H1 (cell line): ENCODE measurements at regions of chr17 and their contacts with region 1.

Region 1: DNA sequence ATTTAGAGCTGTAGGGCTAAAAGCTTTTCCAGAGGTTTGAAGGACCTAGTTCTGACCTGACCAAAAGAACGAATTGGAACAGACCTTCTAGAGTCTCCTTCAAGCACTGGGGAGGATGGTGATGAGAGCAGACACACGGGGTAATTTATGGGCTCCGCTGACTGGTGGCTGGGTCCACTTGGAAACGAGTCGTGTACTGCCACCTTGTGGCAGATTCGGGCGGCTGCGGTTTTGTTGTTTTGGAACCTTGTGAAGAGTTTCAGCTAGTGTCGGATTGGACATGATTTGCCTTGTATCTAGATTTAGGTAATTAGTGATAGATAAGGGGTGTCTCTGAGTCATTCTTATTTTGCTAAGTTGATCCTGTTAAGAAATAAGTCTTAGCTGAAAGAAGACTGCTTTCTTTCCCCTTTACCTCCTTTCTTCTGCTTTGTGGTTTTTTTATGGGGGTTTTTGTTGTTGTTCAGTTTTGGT is 98.9 kb downstream of the AATF start:
- DNase-seq: peak; percentile 72 to 90
- H3K4me3 ChIP-seq: no peak overlapping the region
- H3K27ac ChIP-seq: no peak overlapping the region
- H3K4me1 ChIP-seq: peaks cover 6 to 24% (median 12%) of the 10 kb centered on the region in 4 experiments
- H3K27me3 ChIP-seq: no peaks in the 10 kb centered on the region
- CTCF ChIP-seq: peak; percentile 81 to 94 (median 88)
- EP300 ChIP-seq: no peak
- POLR2A ChIP-seq: no peak
- RAD21 ChIP-seq: peak; percentile 94 to 96

Region 2: DNA sequence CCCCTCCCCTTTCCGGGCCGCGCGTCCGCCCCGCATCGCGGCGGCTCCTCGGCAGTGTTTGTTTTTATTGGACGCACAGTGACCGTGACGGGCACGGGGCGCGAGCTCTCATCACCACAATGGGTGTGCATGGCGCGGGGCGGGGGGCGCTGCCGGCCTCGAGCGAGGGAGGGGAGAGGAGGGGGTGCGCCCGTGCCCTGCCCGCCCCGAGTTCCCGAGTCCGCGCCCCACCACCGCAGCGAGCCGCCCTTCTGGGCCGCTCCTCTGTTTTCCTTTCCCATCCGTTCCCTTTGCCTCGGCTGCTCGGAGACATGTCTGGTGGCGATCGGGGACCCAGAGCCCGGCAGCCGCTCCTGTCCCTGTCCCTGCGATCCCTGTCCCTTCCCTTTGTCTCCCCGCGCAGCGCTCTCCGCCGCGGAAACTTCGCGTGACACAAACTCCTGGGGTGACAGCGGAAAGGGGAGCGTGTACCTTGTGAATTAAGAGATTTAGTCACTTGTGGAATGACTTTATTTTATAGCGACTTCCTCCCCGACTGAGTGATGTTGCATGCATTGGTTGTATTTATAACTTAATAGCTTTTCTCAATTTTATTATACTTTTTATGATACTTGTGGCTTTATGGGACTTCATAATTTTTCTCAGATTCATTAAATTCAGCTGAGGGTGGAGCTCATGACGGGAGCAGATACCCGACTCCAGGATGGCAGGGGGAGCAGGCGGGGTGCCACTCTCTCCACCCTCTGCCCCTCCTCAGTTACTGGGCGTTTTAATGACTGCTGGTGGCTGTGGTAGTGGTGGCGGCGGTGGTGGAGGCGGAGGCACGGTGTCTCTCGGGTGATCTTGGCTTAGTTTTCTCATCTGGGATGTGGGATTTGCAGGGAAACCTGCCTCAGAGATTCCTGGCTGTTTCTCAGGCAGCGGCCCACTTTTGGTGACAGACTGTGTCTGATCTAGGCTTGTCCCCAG is 405.5 kb before region 1 on chr17:
- CTCF ChIA-PET with region 1: interaction called, 11 read pairs
- POLR2A ChIA-PET with region 1: no interaction called
- DNase-seq: no peak
- H3K4me3 ChIP-seq: peak overlapping the region; percentile 37 to 70 (median 65)
- H3K27ac ChIP-seq: no peak overlapping the region
- H3K4me1 ChIP-seq: peaks cover 0 to 6% (median 2%) of the 10 kb centered on the region in 4 experiments; a peak in 6 of 7 replicates
- H3K27me3 ChIP-seq: peaks cover 19 to 47% (median 45%) of the 10 kb centered on the region in 4 experiments
- CTCF ChIP-seq: no peak
- EP300 ChIP-seq: no peak
- POLR2A ChIP-seq: no peak
- RAD21 ChIP-seq: no peak

Region 3: GRCh38 chr17:36755586-36755985 is 292.1 kb before region 1 on chr17:
- CTCF ChIA-PET with region 1: interaction called, 11 read pairs
- POLR2A ChIA-PET with region 1: no interaction called
- DNase-seq: peak; percentile 41 to 83
- H3K4me3 ChIP-seq: no peak overlapping the region
- H3K27ac ChIP-seq: no peak overlapping the region
- H3K4me1 ChIP-seq: peaks cover 0 to 5% (median 0%) of the 10 kb centered on the region in 4 experiments; a peak in 2 of 7 replicates
- H3K27me3 ChIP-seq: no peaks in the 10 kb centered on the region
- CTCF ChIP-seq: peak; percentile 84 to 91 (median 88)
- EP300 ChIP-seq: no peak
- POLR2A ChIP-seq: no peak
- RAD21 ChIP-seq: peak; percentile 84 to 87

Region 4: GRCh38 chr17:36869856-36870719 is 177.6 kb before region 1 on chr17:
- CTCF ChIA-PET with region 1: interaction called, 17 read pairs
- POLR2A ChIA-PET with region 1: no interaction called
- DNase-seq: no peak
- H3K4me3 ChIP-seq: no peak overlapping the region
- H3K27ac ChIP-seq: no peak overlapping the region
- H3K4me1 ChIP-seq: peaks cover 0 to 11% (median 8%) of the 10 kb centered on the region in 4 experiments; a peak in 6 of 7 replicates
- H3K27me3 ChIP-seq: no peaks in the 10 kb centered on the region; a peak in 1 of 7 replicates
- CTCF ChIP-seq: peak in 2 of 3 experiments; percentile 19 to 31; a peak in 2 of 4 replicates
- EP300 ChIP-seq: no peak
- POLR2A ChIP-seq: no peak
- RAD21 ChIP-seq: peak; percentile 5 to 28; a peak in 3 of 4 replicates

Region 5: DNA sequence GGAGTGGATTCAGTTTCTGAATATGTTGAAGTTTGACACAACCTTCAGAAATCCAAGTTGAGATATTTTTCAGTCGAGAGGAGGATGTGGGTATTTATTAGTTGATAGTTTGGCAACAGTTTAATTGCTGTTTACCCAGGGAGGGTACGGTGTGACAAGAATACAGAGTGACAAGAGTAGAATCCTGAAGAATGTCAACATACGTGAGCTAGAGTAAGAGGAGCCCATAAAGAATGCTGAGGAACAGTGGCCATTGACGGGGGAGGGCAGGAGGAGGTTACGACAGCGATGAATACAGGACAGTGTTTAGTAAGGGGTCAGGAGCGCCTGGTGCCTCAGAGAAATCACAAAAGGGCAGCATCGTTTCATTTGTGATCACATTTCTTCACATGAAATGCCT is 22.4 kb before region 1 on chr17:
- CTCF ChIA-PET with region 1: no interaction called
- POLR2A ChIA-PET with region 1: no interaction called
- DNase-seq: no peak
- H3K4me3 ChIP-seq: no peak overlapping the region
- H3K27ac ChIP-seq: no peak overlapping the region
- H3K4me1 ChIP-seq: no peaks in the 10 kb centered on the region
- H3K27me3 ChIP-seq: no peaks in the 10 kb centered on the region
- CTCF ChIP-seq: no peak
- EP300 ChIP-seq: no peak
- POLR2A ChIP-seq: no peak
- RAD21 ChIP-seq: no peak

Region 6: GRCh38 chr17:37060094-37060493 is 12.4 kb after region 1 on chr17:
- CTCF ChIA-PET with region 1: interaction called, 13 read pairs
- POLR2A ChIA-PET with region 1: interaction called, 3 read pairs
- DNase-seq: no peak
- H3K4me3 ChIP-seq: no peak overlapping the region
- H3K27ac ChIP-seq: no peak overlapping the region
- H3K4me1 ChIP-seq: peaks cover 7 to 22% (median 9%) of the 10 kb centered on the region in 4 experiments
- H3K27me3 ChIP-seq: no peaks in the 10 kb centered on the region
- CTCF ChIP-seq: no peak
- EP300 ChIP-seq: no peak
- POLR2A ChIP-seq: no peak
- RAD21 ChIP-seq: no peak

Region 7: GRCh38 chr17:37081287-37081686 is 33.6 kb after region 1 on chr17:
- CTCF ChIA-PET with region 1: interaction called, 10 read pairs
- POLR2A ChIA-PET with region 1: no interaction called
- DNase-seq: no peak
- H3K4me3 ChIP-seq: no peak overlapping the region
- H3K27ac ChIP-seq: no peak overlapping the region
- H3K4me1 ChIP-seq: peaks cover 6 to 18% (median 14%) of the 10 kb centered on the region in 4 experiments
- H3K27me3 ChIP-seq: no peaks in the 10 kb centered on the region
- CTCF ChIP-seq: peak in 2 of 3 experiments; percentile 17 to 31; a peak in 1 of 4 replicates
- EP300 ChIP-seq: no peak
- POLR2A ChIP-seq: no peak
- RAD21 ChIP-seq: 0 out of 4 replicates have a peak, but pooled peaks of 1 of the 2 experiments have one; percentile 33